ENCODE measurements at regions of chr22 and their contacts with region 1.

Region 1: DNA sequence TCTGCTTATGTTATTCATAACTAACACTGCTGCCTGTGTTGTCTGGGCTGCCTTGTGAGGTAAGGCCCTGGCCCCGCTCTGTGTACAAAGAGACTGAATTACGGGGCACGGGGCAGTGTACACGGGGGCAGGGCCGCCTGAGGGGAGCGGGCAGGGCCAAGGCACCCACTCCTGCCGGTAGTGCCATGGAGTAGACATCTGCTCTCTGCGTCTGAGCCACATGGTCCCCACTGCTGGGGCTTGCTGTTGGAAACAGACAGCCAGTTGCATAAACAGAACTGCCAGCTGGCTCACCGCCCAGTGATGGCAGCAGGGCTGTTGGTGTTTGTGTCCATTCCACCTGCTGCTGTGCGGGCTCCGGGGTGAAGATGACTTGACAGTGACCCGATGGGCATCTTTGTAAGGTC is 19.8 kb downstream of the FAM118A start:
- DNase-seq: no peak
- H3K4me3 ChIP-seq: no peak overlapping the region
- H3K27ac ChIP-seq: no peak overlapping the region
- H3K4me1 ChIP-seq: no peaks in the 10 kb centered on the region
- H3K27me3 ChIP-seq: no peaks in the 10 kb centered on the region
- CTCF ChIP-seq: no peak

Region 2: DNA sequence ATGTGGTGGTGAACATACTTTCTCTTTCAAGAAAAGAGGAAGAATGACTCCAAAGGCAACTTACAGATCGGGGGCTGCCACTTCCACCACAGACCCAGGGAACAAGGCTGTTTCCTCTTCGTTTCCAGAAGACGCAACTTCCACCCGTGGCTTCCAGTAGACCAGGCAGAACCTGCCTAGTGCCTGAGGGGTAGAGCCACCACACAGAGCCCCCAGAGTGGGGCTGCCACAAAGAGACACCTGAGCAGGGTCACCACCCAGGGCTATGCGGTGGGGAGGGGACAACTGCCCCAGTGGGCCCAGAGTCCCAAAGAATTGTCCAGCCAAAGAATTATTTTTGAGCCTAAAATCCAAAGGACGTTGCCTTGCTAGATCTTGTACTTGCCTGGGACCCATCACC is 303.0 kb before region 1 on chr22:
- intact Hi-C with region 1: no loop called
- DNase-seq: no peak
- H3K4me3 ChIP-seq: no peak overlapping the region
- H3K27ac ChIP-seq: no peak overlapping the region
- H3K4me1 ChIP-seq: no peaks in the 10 kb centered on the region
- H3K27me3 ChIP-seq: no peaks in the 10 kb centered on the region
- CTCF ChIP-seq: no peak

Region 3: GRCh38 chr22:45413368-45414211 is 84.1 kb after region 1 on chr22 and contains the starts of genes RIBC2 and SMC1B:
- intact Hi-C with region 1: loop called (anchors 10 kb)
- DNase-seq: peak; percentile 90
- H3K4me3 ChIP-seq: peak within 1 kb of the TSS; percentile 40
- H3K27ac ChIP-seq: no peak within 1 kb of the TSS
- H3K4me1 ChIP-seq: peaks cover 5% of the 10 kb centered on the region
- H3K27me3 ChIP-seq: no peaks in the 10 kb centered on the region
- CTCF ChIP-seq: no peak
- total RNA-seq, gene RIBC2: 0.85 to 6.7 TPM
- total RNA-seq, gene SMC1B: 0.15 TPM in 1 of 2 donors, not detected in the other

Measured in colonic mucosa (tissue), 4 donors.